Esophagus muscularis mucosa (tissue), 4 donors: ENCODE measurements at regions of chr9 and their contacts with region 1.

Region 1: GRCh38 chr9:100598641-100599145 is 20.8 kb downstream of the CAVIN4 start:
- DNase-seq: no peak
- H3K4me3 ChIP-seq: peak overlapping the region; percentile 48 to 64 (median 50)
- H3K27ac ChIP-seq: no peak overlapping the region
- H3K4me1 ChIP-seq: peaks cover 7 to 19% (median 14%) of the 10 kb centered on the region in 4 donors
- H3K27me3 ChIP-seq: no peaks in the 10 kb centered on the region
- CTCF ChIP-seq: no peak
- EP300 ChIP-seq: no peak
- POLR2A ChIP-seq: no peak

Region 2: GRCh38 chr9:99819856-99820684 is 778.6 kb before region 1 on chr9:
- intact Hi-C with region 1: loop called (anchors 10 kb)
- DNase-seq: peak; percentile 98
- H3K4me3 ChIP-seq: peak overlapping the region; percentile 84 to 95 (median 85)
- H3K27ac ChIP-seq: peak overlapping the region; percentile 99 to 100 (median 99)
- H3K4me1 ChIP-seq: peaks cover 28 to 55% (median 41%) of the 10 kb centered on the region in 4 donors
- H3K27me3 ChIP-seq: peaks cover 0 to 9% (median 2%) of the 10 kb centered on the region in 4 donors
- CTCF ChIP-seq: peak in 1 of 3 experiments; percentile 17
- EP300 ChIP-seq: peak; percentile 98
- POLR2A ChIP-seq: peak; percentile 62

Region 3: DNA sequence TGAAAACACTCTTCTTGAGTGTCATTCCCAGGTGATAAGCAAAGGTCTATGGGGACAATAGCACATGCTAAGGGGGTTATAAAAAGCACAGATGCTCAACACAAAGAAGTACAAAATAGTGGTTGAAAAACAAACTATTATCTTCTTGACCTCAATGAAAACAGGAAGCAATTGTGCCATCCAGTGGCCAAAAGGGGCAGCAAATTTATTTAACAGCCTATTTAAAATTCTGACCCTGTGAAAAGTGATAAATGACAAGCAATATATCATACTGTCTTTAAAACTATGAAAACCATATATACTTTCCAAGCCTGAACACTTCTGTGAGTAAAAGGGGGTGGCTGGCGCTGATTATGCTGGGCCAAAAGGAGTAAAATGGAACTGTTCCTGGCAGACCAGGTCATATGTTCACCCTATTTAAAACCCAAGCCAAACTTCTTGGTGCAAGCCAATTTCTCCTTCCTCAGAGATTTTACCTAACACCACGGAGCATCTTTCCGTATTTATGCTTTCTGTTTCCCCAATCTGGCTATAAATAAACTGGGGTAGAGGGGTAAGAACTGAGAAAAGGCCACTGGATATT is 275.6 kb before region 1 on chr9:
- intact Hi-C with region 1: loop called (anchors 10 kb)
- DNase-seq: no peak
- H3K4me3 ChIP-seq: no peak overlapping the region
- H3K27ac ChIP-seq: no peak overlapping the region
- H3K4me1 ChIP-seq: no peaks in the 10 kb centered on the region
- H3K27me3 ChIP-seq: no peaks in the 10 kb centered on the region
- CTCF ChIP-seq: peak; percentile 47 to 80 (median 54)
- EP300 ChIP-seq: no peak
- POLR2A ChIP-seq: no peak

Region 4: DNA sequence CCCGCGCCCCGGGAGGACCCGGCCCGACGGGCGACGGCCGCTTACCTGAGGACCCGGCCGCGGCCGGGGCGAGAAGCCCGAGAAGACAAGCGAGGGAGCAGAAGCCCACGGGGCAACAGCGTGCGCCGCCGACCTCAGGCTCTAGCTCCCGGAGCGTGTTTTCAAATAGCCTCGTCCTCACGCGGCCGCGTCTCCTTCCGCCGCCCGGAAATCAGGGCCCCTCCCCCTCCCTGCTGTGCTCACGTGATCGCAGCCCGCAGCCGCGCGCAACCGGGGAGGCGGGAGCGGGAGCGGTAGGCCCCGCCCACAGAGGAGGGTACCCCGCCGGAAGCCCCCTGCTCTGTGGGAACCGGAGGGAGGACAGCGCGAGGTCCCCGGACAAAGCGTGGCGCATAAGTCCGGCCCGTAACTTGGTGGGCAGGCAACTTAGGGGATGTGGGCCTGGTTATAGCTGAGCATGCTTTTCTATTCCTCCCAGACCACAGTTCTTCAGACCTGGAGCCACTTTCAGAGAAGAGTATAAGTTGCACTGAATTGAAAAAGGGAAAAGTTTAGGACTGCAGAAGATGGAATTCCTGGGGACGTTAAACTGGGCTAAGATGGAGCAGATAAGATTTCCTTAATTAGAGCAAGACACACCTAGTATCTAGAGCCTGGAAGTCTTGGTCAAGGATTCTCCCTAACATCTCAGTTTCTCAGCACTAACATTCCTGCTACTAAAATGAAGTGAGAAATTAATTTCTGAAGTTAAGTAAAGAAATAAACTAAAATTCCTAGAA is 245.8 kb before region 1 on chr9 and contains the start of gene TEX10:
- intact Hi-C with region 1: loop called (anchors 5 kb)
- DNase-seq: peak; percentile 95
- H3K4me3 ChIP-seq: peak within 1 kb of the TSS; percentile 79 to 100 (median 92)
- H3K27ac ChIP-seq: peak within 1 kb of the TSS; percentile 87 to 91 (median 89)
- H3K4me1 ChIP-seq: peaks cover 10 to 35% (median 29%) of the 10 kb centered on the region in 4 donors
- H3K27me3 ChIP-seq: no peaks in the 10 kb centered on the region
- CTCF ChIP-seq: no peak
- EP300 ChIP-seq: no peak
- POLR2A ChIP-seq: peak; percentile 46
- total RNA-seq, gene TEX10: 10.4 to 16.4 (median 11.2) TPM

Region 5: DNA sequence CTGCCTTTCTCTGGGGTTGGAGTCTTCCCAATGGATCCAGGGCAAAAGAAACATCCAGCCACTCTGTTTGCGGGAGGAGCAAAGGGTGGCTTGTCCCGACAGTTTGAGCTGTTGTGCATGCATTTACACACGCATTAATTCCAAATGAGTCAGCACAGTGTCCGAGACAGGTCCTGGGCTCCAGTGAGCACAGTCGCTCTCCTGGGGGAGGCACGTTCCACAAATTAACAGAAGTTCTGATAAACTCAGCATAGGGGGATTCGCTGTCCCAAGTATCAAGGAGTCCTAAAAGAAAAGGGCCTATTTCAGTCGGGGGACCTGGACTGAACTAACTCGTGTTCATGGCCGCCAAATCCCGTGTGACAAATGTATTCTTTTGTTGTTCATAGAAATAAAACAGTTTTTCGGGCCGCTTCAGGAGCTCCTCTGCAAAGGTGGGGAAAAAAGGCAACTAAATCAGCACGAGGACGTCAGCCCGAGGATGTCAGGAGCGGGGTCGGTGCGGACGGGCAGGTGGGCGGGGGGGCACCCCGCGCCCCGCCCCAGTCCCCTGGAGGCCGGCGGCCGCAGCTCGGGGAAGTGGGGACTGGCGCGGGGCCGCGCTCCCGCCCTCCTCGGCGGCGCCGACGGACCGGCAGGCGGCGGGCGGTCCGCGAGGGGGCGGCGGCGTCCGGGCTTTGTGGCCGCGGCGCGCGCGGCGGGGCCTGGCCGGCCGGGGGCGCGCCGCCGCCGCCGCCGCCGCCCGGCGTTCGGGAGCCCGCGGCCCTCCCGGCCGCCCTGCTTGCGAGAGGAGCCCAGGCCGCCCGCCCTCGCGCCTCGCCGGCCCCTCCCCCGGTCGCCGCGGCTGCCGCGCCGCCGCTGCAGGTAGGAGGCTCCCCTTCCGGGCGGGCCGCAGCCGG is 171.9 kb before region 1 on chr9 and contains the start of gene MSANTD3:
- intact Hi-C with region 1: loop called (anchors 5 kb)
- DNase-seq: no peak
- H3K4me3 ChIP-seq: peak within 1 kb of the TSS; percentile 82 to 98 (median 86)
- H3K27ac ChIP-seq: peak within 1 kb of the TSS; percentile 94 to 97 (median 96)
- H3K4me1 ChIP-seq: peaks cover 32 to 37% (median 36%) of the 10 kb centered on the region in 4 donors
- H3K27me3 ChIP-seq: no peaks in the 10 kb centered on the region
- CTCF ChIP-seq: peak in 1 of 3 experiments; percentile 27
- EP300 ChIP-seq: no peak
- POLR2A ChIP-seq: no peak
- total RNA-seq, gene MSANTD3: 28.5 to 50.4 (median 41.3) TPM

Region 6: GRCh38 chr9:100813871-100814270 is 215.2 kb after region 1 on chr9:
- intact Hi-C with region 1: no loop called
- DNase-seq: no peak
- H3K4me3 ChIP-seq: no peak overlapping the region
- H3K27ac ChIP-seq: no peak overlapping the region
- H3K4me1 ChIP-seq: no peaks in the 10 kb centered on the region
- H3K27me3 ChIP-seq: peaks cover 0 to 8% (median 0%) of the 10 kb centered on the region in 4 donors
- CTCF ChIP-seq: no peak
- EP300 ChIP-seq: no peak
- POLR2A ChIP-seq: no peak

Region 7: GRCh38 chr9:101158361-101158760 is 559.7 kb after region 1 on chr9:
- intact Hi-C with region 1: no loop called
- DNase-seq: no peak
- H3K4me3 ChIP-seq: no peak overlapping the region
- H3K27ac ChIP-seq: no peak overlapping the region
- H3K4me1 ChIP-seq: no peaks in the 10 kb centered on the region
- H3K27me3 ChIP-seq: no peaks in the 10 kb centered on the region
- CTCF ChIP-seq: no peak
- EP300 ChIP-seq: no peak
- POLR2A ChIP-seq: no peak

Region 8: GRCh38 chr9:101311758-101312420 is 713.2 kb after region 1 on chr9:
- intact Hi-C with region 1: loop called (anchors 5 kb)
- DNase-seq: no peak
- H3K4me3 ChIP-seq: no peak overlapping the region
- H3K27ac ChIP-seq: no peak overlapping the region
- H3K4me1 ChIP-seq: peaks cover 0 to 7% (median 0%) of the 10 kb centered on the region in 4 donors
- H3K27me3 ChIP-seq: no peaks in the 10 kb centered on the region
- CTCF ChIP-seq: peak; percentile 55 to 75 (median 72)
- EP300 ChIP-seq: no peak
- POLR2A ChIP-seq: no peak